ENCODE measurements at regions of chrX and their contacts with region 1.

Region 1: GRCh38 chrX:68462653-68463052 is 29.4 kb upstream of the OPHN1 start:
- DNase-seq: peak in 18 of 42 donors; percentile 6 to 64 (median 24)

Region 2: GRCh38 chrX:68196939-68197791 is 265.5 kb before region 1 on chrX:
- intact Hi-C with region 1: loop called (anchors 5 kb)
- DNase-seq: peak in 33 of 42 donors; percentile 3 to 71 (median 44)

Region 3: DNA sequence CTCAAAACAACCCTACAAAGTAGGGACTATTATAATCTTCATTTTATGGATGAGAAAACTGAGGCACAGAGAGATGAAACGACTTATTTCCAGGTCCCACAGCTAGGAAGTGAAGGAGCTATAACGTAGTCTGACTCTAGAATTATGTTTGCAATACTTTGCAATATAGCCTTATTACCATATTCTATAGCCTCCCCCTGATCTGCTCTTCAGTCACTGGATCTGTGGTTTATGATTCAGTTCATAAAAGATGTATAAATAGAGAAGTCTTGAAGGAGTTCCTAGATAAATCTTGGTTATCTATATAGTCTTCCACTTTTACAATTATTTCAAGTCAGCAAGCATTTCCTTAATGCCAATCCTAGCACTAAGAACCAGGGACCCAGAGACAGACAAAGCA is 86.8 kb before region 1 on chrX:
- intact Hi-C with region 1: no loop called
- DNase-seq: no peak

Measured in head of caudate nucleus (tissue), 42 donors.